GM12878 (cell line): ENCODE measurements at regions of chr21 and their contacts with region 1.

Region 1: DNA sequence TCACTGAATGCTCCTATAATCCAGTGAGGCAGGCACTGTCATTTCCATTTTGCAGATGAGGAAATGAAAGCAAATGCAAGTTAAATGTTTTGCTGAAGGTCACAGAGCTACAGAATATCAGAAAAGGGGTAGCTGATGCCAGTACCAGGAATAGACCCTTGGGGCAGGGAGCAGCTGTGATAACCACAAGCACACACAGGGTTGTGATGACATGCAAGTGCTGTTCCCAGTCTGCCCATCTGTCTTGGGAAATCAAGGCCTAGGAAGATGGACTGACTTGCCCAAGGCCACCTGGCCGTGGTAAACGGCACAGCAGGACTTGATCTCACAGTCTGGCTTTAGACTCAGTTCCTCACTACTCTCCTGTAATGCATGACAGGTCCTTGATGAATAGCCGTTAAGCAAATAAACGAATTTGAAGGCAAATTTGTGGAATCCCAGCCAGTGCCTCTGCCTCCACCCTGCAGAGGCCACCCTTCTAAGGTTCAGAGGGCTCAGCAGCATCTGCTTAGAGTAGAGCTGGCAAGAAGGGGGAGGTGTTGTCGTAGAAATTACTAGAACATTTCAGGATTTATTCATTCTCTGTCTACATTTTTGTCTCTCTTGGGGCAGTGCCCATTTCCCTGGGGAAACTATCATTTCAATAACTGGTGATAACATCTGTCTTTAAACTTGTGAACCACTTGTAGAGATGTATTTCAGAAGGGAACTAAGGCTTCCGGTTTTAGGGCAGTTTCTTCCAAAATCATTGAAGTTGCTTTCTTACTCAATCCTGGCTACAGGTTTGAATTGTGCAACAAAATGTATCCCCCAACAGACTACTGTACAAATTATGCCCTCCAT is 53.2 kb upstream of the MRPS6 start:
- DNase-seq: peak; percentile 92
- ATAC-seq: peak; percentile 60
- H3K4me3 ChIP-seq: peak overlapping the region; percentile 18; the same call in 1 of the 2 replicates
- H3K27ac ChIP-seq: peak overlapping the region; percentile 93
- H3K4me1 ChIP-seq: peaks cover 58% of the 10 kb centered on the region
- H3K27me3 ChIP-seq: no peaks in the 10 kb centered on the region
- CTCF ChIP-seq: peak in 1 of 3 experiments; percentile 23; a peak in 2 of 6 replicates
- EP300 ChIP-seq: peak; percentile 58; a peak in 3 of 4 replicates
- POLR2A ChIP-seq: no peak
- RAD21 ChIP-seq: peak; percentile 29; the same call in 1 of the 2 replicates

Region 2: DNA sequence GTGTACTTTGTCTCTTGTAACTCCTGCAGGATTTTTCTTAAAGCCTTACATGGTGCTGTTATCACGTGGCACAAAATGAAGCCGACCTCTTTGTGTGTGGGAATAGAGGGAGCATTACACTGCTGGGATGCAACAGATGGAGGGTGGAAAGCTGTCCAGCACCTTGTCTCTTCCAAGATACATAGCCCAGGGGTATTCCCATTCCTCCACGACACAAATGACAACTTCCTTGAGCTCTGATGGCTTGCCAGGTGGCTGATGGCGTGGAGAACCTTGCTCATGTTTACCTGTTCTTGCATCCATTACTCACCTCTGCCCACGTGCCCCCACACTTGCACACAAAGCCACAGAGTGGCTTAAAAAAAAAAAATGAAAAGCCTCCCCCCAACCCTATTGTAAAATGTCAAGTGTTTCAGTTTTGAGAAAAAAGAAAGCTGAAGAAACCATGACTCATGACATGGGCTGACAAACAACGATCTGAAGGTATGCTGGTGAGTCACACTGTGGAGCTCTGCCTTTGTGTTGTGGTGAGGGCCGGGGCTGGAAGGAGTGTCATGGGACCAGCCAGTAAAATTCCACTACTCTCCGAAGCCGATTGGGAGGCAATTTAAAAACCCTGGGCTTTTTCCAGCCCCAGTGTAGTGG is 72.7 kb before region 1 on chr21:
- CTCF ChIA-PET with region 1: interaction called, 11 read pairs
- POLR2A ChIA-PET with region 1: interaction called, 9 read pairs
- RAD21 ChIA-PET with region 1: interaction called, 123 read pairs
- SMC1A ChIA-PET with region 1: interaction called, 169 read pairs
- in situ Hi-C with region 1: no loop called
- intact Hi-C with region 1: loop called (anchors 1 kb)
- DNase-seq: peak; percentile 83
- ATAC-seq: peak; percentile 72
- H3K4me3 ChIP-seq: peak overlapping the region; percentile 46; the same call in 1 of the 2 replicates
- H3K27ac ChIP-seq: peak overlapping the region; percentile 97
- H3K4me1 ChIP-seq: peaks cover 51% of the 10 kb centered on the region
- H3K27me3 ChIP-seq: no peaks in the 10 kb centered on the region
- CTCF ChIP-seq: peak in 1 of 3 experiments; percentile 15; a peak in 1 of 6 replicates
- EP300 ChIP-seq: peak in 1 of 2 experiments; percentile 62; a peak in 3 of 4 replicates
- POLR2A ChIP-seq: no peak; the same call in 1 of the 2 replicates
- RAD21 ChIP-seq: peak; percentile 33; the same call in 1 of the 2 replicates

Region 3: GRCh38 chr21:33981391-33982101 is 38.7 kb before region 1 on chr21:
- CTCF ChIA-PET with region 1: interaction called, 12 read pairs
- POLR2A ChIA-PET with region 1: interaction called, 57 read pairs
- RAD21 ChIA-PET with region 1: interaction called, 145 read pairs
- SMC1A ChIA-PET with region 1: interaction called, 193 read pairs
- in situ Hi-C with region 1: no loop called
- intact Hi-C with region 1: loop called (anchors 2 kb)
- DNase-seq: no peak
- ATAC-seq: no peak
- H3K4me3 ChIP-seq: no peak overlapping the region
- H3K27ac ChIP-seq: no peak overlapping the region
- H3K4me1 ChIP-seq: peaks cover 35% of the 10 kb centered on the region
- H3K27me3 ChIP-seq: no peaks in the 10 kb centered on the region
- CTCF ChIP-seq: no peak
- EP300 ChIP-seq: no peak
- POLR2A ChIP-seq: no peak
- RAD21 ChIP-seq: no peak

Region 4: GRCh38 chr21:34034369-34035014 is 14.3 kb after region 1 on chr21:
- CTCF ChIA-PET with region 1: interaction called, 6 read pairs
- POLR2A ChIA-PET with region 1: interaction called, 5 read pairs
- RAD21 ChIA-PET with region 1: interaction called, 10 read pairs
- SMC1A ChIA-PET with region 1: interaction called, 22 read pairs
- in situ Hi-C with region 1: no loop called
- intact Hi-C with region 1: no loop called
- DNase-seq: no peak
- ATAC-seq: no peak
- H3K4me3 ChIP-seq: no peak overlapping the region
- H3K27ac ChIP-seq: no peak overlapping the region
- H3K4me1 ChIP-seq: peaks cover 11% of the 10 kb centered on the region; the same call in 1 of the 2 replicates
- H3K27me3 ChIP-seq: no peaks in the 10 kb centered on the region
- CTCF ChIP-seq: no peak
- EP300 ChIP-seq: no peak
- POLR2A ChIP-seq: no peak
- RAD21 ChIP-seq: no peak

Region 5: DNA sequence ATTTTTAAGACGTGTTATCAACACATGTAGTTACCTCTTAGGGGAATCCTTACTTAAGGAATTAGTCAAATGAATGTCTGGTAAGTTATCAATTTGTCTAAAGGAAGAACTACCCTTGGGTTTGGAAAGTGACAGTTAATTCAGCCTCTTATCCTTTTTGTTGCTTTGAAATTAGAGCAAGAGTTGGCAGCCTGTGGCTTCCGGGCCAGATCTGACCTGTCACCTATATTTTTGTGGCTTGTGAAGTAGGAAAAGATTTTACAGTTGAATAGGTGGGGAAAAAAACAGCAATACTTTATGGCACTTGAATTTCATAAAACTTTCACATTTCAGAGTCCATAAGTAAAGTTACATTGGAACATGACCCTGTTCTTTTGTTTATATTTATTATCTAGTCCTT is 58.7 kb after region 1 on chr21:
- CTCF ChIA-PET with region 1: interaction called, 27 read pairs
- POLR2A ChIA-PET with region 1: interaction called, 15 read pairs
- RAD21 ChIA-PET with region 1: interaction called, 51 read pairs
- SMC1A ChIA-PET with region 1: interaction called, 118 read pairs
- in situ Hi-C with region 1: no loop called
- intact Hi-C with region 1: loop called (anchors 2 kb)
- DNase-seq: no peak
- ATAC-seq: peak; percentile 8; the same call in 2 of the 3 replicates
- H3K4me3 ChIP-seq: 0 out of 2 replicates have a peak overlapping the region, but pooled peaks have one; percentile 16
- H3K27ac ChIP-seq: 0 out of 2 replicates have a peak overlapping the region, but pooled peaks have one; percentile 9
- H3K4me1 ChIP-seq: peaks cover 32% of the 10 kb centered on the region
- H3K27me3 ChIP-seq: no peaks in the 10 kb centered on the region
- CTCF ChIP-seq: no peak
- EP300 ChIP-seq: no peak
- POLR2A ChIP-seq: no peak
- RAD21 ChIP-seq: no peak

Region 6: GRCh38 chr21:34166468-34166867 is 146.2 kb after region 1 on chr21:
- CTCF ChIA-PET with region 1: no interaction called
- POLR2A ChIA-PET with region 1: no interaction called
- RAD21 ChIA-PET with region 1: no interaction called
- SMC1A ChIA-PET with region 1: no interaction called
- in situ Hi-C with region 1: no loop called
- intact Hi-C with region 1: no loop called
- DNase-seq: no peak
- ATAC-seq: no peak
- H3K4me3 ChIP-seq: no peak overlapping the region
- H3K27ac ChIP-seq: no peak overlapping the region
- H3K4me1 ChIP-seq: no peaks in the 10 kb centered on the region
- H3K27me3 ChIP-seq: no peaks in the 10 kb centered on the region
- CTCF ChIP-seq: no peak
- EP300 ChIP-seq: no peak
- POLR2A ChIP-seq: no peak
- RAD21 ChIP-seq: no peak

Region 7: GRCh38 chr21:34865928-34866284 is 845.7 kb after region 1 on chr21:
- CTCF ChIA-PET with region 1: no interaction called
- POLR2A ChIA-PET with region 1: no interaction called
- RAD21 ChIA-PET with region 1: no interaction called
- SMC1A ChIA-PET with region 1: no interaction called
- in situ Hi-C with region 1: loop called (anchors 25 kb)
- intact Hi-C with region 1: no loop called
- DNase-seq: peak; percentile 74
- ATAC-seq: peak; percentile 93
- H3K4me3 ChIP-seq: no peak overlapping the region; the same call in 1 of the 2 replicates
- H3K27ac ChIP-seq: peak overlapping the region; percentile 76
- H3K4me1 ChIP-seq: peaks cover 29% of the 10 kb centered on the region
- H3K27me3 ChIP-seq: no peaks in the 10 kb centered on the region; a peak in 1 of 4 replicates
- CTCF ChIP-seq: no peak
- EP300 ChIP-seq: peak; percentile 76 to 97; a peak in 3 of 4 replicates
- POLR2A ChIP-seq: no peak
- RAD21 ChIP-seq: no peak; the same call in 1 of the 2 replicates